ENCODE measurements at regions of chr12 and their contacts with region 1.

Region 1: GRCh38 chr12:124609041-124609995 is 41.9 kb upstream of the NCOR2 start:
- DNase-seq: peak; percentile 77 to 95 (median 90)
- ATAC-seq: peak; percentile 93
- H3K4me3 ChIP-seq: peak overlapping the region in 1 of 2 experiments; percentile 21
- H3K4me3 Mint-ChIP-seq: peak overlapping the region; percentile 82
- H3K27ac ChIP-seq: no peak overlapping the region
- H3K27ac Mint-ChIP-seq: peak overlapping the region; percentile 76
- H3K4me1 ChIP-seq: peaks cover 30% of the 10 kb centered on the region
- H3K4me1 Mint-ChIP-seq: peaks cover 37% of the 10 kb centered on the region
- H3K27me3 ChIP-seq: no peaks in the 10 kb centered on the region
- H3K27me3 Mint-ChIP-seq: no peaks in the 10 kb centered on the region
- CTCF ChIP-seq: no peak

Region 2: GRCh38 chr12:124453419-124454351 is 155.6 kb before region 1 on chr12:
- CTCF ChIA-PET with region 1: no interaction called
- POLR2A ChIA-PET with region 1: no interaction called
- intact Hi-C with region 1: loop called in 1 of 2 experiments (anchors 5 kb)
- DNase-seq: peak; percentile 64 to 95 (median 84)
- ATAC-seq: peak; percentile 78
- H3K4me3 ChIP-seq: peak overlapping the region; percentile 29 to 57
- H3K4me3 Mint-ChIP-seq: peak overlapping the region; percentile 67
- H3K27ac ChIP-seq: peak overlapping the region; percentile 41 to 92
- H3K27ac Mint-ChIP-seq: peak overlapping the region; percentile 82
- H3K4me1 ChIP-seq: peaks cover 82% of the 10 kb centered on the region
- H3K4me1 Mint-ChIP-seq: peaks cover 67% of the 10 kb centered on the region
- H3K27me3 ChIP-seq: no peaks in the 10 kb centered on the region
- H3K27me3 Mint-ChIP-seq: no peaks in the 10 kb centered on the region
- CTCF ChIP-seq: no peak

Region 3: DNA sequence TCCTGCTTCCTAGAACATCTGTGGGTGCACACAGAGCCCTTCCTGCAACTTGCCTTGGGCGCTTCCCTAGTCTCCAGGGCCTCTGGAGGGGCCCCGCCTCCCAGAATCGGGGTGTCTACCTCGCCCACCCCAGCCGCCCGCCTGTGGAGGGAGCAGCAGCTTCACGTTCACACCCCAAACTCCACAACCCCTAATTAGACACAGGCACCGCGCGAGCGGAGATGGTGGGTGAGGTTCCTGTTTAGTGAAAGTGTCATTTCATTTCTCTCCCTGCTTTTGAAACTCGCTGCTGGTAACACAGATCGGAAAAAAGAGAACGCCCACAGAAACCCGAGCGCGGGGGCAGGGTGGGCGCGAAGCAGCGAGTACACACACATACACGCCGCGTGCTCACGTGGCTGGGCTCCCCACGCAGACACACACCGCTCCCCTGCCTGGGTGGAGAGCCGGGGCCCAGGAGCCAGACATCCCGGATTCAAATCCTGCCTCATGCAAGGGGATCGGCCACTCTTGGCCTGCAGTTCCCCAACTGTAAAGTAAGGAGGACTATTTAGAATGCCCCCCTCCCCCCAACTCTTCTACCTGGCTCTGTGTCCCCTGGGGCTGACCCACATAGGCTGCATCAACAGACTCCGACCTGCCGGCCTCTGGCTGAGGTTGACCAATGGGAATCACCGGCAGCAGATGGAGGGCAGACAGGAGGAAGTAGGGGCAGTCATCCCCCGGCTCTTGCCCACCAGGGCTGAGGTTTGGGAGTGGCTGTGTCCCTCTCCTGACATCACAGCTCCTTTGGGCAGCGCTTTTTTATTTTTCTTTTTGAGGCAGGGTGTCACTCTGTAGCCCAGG is 37.3 kb after region 1 on chr12:
- CTCF ChIA-PET with region 1: no interaction called
- POLR2A ChIA-PET with region 1: no interaction called
- intact Hi-C with region 1: loop called in 1 of 2 experiments (anchors 1 kb)
- DNase-seq: peak in 7 of 9 experiments; percentile 6 to 58 (median 26)
- ATAC-seq: peak; percentile 55
- H3K4me3 ChIP-seq: peak overlapping the region; percentile 3 to 30
- H3K4me3 Mint-ChIP-seq: peak overlapping the region; percentile 78
- H3K27ac ChIP-seq: no peak overlapping the region
- H3K27ac Mint-ChIP-seq: peak overlapping the region; percentile 72
- H3K4me1 ChIP-seq: peaks cover 16% of the 10 kb centered on the region
- H3K4me1 Mint-ChIP-seq: peaks cover 22% of the 10 kb centered on the region
- H3K27me3 ChIP-seq: no peaks in the 10 kb centered on the region
- H3K27me3 Mint-ChIP-seq: no peaks in the 10 kb centered on the region
- CTCF ChIP-seq: no peak

Region 4: GRCh38 chr12:124713436-124714082 is 104.2 kb after region 1 on chr12:
- CTCF ChIA-PET with region 1: no interaction called
- POLR2A ChIA-PET with region 1: no interaction called
- intact Hi-C with region 1: loop called in 1 of 2 experiments (anchors 2 kb)
- DNase-seq: peak in 8 of 9 experiments; percentile 32 to 85 (median 54)
- ATAC-seq: peak; percentile 90
- H3K4me3 ChIP-seq: peak overlapping the region; percentile 40 to 42
- H3K4me3 Mint-ChIP-seq: peak overlapping the region; percentile 76
- H3K27ac ChIP-seq: peak overlapping the region in 1 of 2 experiments; percentile 43
- H3K27ac Mint-ChIP-seq: peak overlapping the region; percentile 81
- H3K4me1 ChIP-seq: peaks cover 16% of the 10 kb centered on the region
- H3K4me1 Mint-ChIP-seq: peaks cover 17% of the 10 kb centered on the region
- H3K27me3 ChIP-seq: no peaks in the 10 kb centered on the region
- H3K27me3 Mint-ChIP-seq: no peaks in the 10 kb centered on the region
- CTCF ChIP-seq: no peak